Pancreas (tissue), 10 donors: ENCODE measurements at regions of chr1 and their contacts with region 1.

Region 1: GRCh38 chr1:160006312-160006940 is 25.4 kb downstream of the PIGM start:
- DNase-seq: peak; percentile 60 to 86 (median 75)
- ATAC-seq: peak; percentile 78 to 95 (median 92)
- H3K4me3 ChIP-seq: no peak overlapping the region
- H3K27ac ChIP-seq: no peak overlapping the region
- H3K4me1 ChIP-seq: no peaks in the 10 kb centered on the region
- H3K27me3 ChIP-seq: no peaks in the 10 kb centered on the region
- CTCF ChIP-seq: peak; percentile 50 to 79 (median 72)

Region 2: GRCh38 chr1:159936273-159936904 is 70.0 kb before region 1 on chr1:
- intact Hi-C with region 1: loop called in 2 of 3 experiments (anchors 2 to 5 kb)
- DNase-seq: peak; percentile 59 to 96 (median 86)
- ATAC-seq: peak; percentile 78 to 95 (median 90)
- H3K4me3 ChIP-seq: no peak overlapping the region
- H3K27ac ChIP-seq: no peak overlapping the region
- H3K4me1 ChIP-seq: no peaks in the 10 kb centered on the region
- H3K27me3 ChIP-seq: no peaks in the 10 kb centered on the region
- CTCF ChIP-seq: peak; percentile 92 to 99 (median 95)

Region 3: GRCh38 chr1:159945483-159946241 is 60.8 kb before region 1 on chr1 and contains the start of gene IGSF9:
- intact Hi-C with region 1: loop called in 1 of 3 experiments (anchors 2 kb)
- DNase-seq: peak; percentile 87 to 96 (median 92)
- ATAC-seq: peak; percentile 91 to 94 (median 92)
- H3K4me3 ChIP-seq: peak within 1 kb of the TSS; percentile 7 to 57 (median 56)
- H3K27ac ChIP-seq: peak within 1 kb of the TSS; percentile 44 to 84 (median 70)
- H3K4me1 ChIP-seq: peaks cover 3 to 12% (median 4%) of the 10 kb centered on the region in 3 donors
- H3K27me3 ChIP-seq: no peaks in the 10 kb centered on the region
- CTCF ChIP-seq: peak in 3 of 4 donors; percentile 13 to 22 (median 20)
- total RNA-seq, gene IGSF9: 0.83 to 4.3 (median 1.5) TPM

Region 4: DNA sequence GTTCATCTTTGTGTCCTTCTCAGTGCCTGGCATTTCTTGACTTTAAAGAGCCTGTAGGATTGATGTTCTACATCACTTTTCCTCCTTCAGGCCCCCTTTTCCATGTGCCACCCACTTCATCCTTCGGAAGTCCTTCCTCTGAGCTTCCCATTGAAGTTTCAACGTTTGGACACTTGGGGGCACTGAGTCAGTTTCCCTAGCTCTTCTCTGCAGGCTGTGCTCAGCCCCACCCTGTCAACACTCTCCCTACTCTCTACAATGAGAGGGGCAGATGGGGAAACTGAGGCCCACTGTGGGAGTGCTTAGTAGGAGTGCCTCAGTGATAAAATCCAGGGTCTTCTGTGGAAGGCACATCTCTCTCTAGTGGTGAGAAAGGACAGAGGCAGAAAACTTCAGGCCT is 51.7 kb after region 1 on chr1:
- intact Hi-C with region 1: no loop called
- DNase-seq: no peak
- ATAC-seq: no peak
- H3K4me3 ChIP-seq: no peak overlapping the region
- H3K27ac ChIP-seq: no peak overlapping the region
- H3K4me1 ChIP-seq: no peaks in the 10 kb centered on the region
- H3K27me3 ChIP-seq: no peaks in the 10 kb centered on the region
- CTCF ChIP-seq: no peak

Region 5: DNA sequence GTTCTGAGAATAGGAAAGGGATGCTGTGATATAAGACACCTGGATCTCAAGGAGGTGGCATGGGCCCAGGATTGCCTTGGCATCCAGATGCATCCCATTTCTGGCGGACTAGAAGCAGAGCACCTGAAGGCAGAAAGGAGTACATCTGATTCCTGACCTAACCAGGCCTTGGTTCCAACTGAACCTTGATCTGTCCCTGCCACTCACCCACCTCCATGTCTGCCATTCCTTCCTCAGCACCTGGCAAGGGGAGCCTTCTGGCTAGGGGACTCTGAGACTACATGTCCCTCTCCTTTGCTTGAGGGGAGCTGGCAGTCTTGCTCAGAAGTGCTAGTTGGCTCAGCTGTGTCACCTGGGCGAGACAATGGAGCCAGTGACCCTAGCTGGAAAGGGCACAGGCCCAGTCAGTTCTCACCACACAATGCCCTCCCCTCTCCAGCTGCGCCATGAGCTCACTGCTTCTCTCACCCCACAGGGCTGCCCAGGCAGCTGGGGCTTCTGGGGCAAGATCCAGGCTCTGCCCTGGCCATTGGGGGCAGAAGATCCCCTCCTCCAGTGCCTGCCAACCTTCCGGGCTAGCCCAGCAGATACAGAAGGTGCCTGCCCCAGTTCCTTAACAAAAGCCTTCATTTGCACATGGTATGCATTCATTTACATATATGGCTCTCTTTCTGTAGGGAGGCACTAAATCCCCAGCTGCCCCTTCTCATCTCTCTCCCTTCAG is 89.1 kb after region 1 on chr1:
- intact Hi-C with region 1: no loop called
- DNase-seq: no peak
- ATAC-seq: no peak
- H3K4me3 ChIP-seq: no peak overlapping the region
- H3K27ac ChIP-seq: no peak overlapping the region
- H3K4me1 ChIP-seq: peaks cover 5 to 24% (median 13%) of the 10 kb centered on the region in 3 donors
- H3K27me3 ChIP-seq: no peaks in the 10 kb centered on the region
- CTCF ChIP-seq: no peak